AG04449 (cell line): ENCODE measurements at regions of chr3 and their contacts with region 1.

Region 1: DNA sequence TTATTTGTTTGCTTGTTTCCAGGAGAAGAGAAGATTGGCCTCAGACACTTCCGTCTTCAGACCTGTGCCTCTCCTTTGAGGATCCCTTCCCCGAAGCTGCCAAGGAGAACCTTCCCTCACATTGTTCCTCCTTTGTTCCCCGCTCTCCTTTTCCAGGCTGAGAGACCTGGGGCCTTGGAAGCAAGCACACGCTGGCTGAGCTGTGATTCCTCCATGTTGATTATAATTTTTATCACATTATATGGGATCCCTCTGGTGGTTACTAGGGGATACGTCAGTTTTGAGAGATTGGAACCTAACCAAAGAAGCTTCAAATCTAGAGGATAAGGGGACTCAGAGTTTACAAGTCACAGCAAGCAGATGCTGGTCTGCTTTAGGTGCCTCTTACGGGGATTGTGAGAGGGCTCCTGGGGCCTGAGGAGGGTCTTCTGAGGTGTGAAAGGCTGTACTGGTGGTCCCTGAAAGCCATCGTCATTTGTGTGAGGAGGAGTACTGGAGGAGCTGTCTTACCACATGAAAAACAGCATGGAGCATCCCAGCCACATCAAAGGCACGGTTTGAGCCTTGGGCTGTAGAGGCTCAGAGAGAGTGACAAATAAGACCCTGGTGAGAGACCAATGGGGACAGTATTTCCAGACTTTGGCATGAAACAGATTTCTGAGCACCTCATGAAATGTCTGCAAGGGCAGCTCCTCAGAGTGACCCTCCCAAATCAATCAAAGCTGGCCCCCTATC is 760.1 kb upstream of the CFAP20DC start:
- DNase-seq: no peak
- H3K4me3 ChIP-seq: no peak overlapping the region
- CTCF ChIP-seq: peak; percentile 17

Region 2: GRCh38 chr3:59759298-59760031 is 50.4 kb before region 1 on chr3:
- CTCF ChIA-PET with region 1: no interaction called
- POLR2A ChIA-PET with region 1: no interaction called
- DNase-seq: no peak
- H3K4me3 ChIP-seq: no peak overlapping the region
- CTCF ChIP-seq: no peak

Region 3: GRCh38 chr3:59771768-59772181 is 38.1 kb before region 1 on chr3:
- CTCF ChIA-PET with region 1: interaction called, 10 read pairs
- POLR2A ChIA-PET with region 1: no interaction called
- DNase-seq: peak; percentile 91
- H3K4me3 ChIP-seq: no peak overlapping the region
- CTCF ChIP-seq: no peak

Region 4: DNA sequence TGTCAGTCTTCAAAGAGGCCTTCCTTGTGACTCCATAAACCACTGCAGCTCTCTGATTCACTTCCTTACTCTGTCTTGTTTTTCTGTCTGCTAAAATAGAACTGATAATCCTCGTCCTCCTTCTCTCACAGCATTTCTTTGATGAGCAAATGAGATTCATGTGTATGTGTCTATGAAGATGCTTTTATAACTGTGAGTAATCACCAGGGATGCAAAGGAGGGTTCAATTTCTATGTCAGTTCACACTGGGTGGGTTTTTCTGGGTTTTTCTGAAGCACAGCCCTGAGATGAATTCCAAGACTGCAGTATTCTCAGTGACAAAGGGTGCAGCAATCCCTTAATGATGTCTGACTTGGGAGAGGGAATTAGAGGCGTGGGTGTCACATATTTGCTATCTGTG is 13.4 kb before region 1 on chr3:
- CTCF ChIA-PET with region 1: interaction called, 13 read pairs
- POLR2A ChIA-PET with region 1: no interaction called
- DNase-seq: no peak
- H3K4me3 ChIP-seq: no peak overlapping the region
- CTCF ChIP-seq: no peak

Region 5: DNA sequence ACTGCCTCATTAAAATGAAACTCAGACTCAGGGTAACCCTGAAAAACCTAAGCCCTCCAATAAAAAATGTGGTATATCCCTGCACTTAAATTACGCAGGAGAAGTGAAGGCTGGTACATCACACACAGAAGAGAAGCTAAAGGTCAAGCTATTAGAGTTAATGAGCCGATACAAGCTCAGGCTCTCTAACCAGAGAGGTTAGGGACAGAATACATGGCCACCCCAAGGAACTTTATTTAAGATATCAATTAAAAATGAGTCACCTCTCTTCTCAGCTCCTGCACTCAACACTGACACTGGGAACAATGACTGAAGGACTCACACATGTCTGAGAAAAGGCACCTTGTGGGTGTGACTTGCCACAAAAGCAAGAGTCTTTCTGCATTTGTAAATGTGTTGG is 40.5 kb after region 1 on chr3:
- CTCF ChIA-PET with region 1: no interaction called
- POLR2A ChIA-PET with region 1: no interaction called
- DNase-seq: no peak
- H3K4me3 ChIP-seq: no peak overlapping the region
- CTCF ChIP-seq: no peak

Region 6: DNA sequence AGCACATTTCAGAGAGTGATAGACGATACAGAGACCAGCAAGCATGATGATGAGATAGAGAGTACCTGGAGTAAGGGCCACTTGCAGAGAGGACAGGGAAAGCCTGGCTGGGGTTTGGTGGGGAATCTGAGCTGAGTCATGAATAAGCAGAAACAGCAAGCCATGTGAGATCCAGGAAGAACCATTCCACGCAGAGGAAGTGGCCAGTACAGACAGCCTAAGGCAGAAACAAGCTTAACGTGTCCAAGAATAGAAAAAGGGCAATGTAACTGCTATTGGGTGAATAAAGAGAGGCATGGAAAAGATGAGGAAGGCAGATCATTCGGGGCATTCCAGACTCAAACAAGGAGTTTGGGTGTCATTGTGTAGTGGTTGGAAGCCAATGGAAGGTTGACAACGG is 56.2 kb after region 1 on chr3:
- CTCF ChIA-PET with region 1: no interaction called
- POLR2A ChIA-PET with region 1: no interaction called
- DNase-seq: no peak
- H3K4me3 ChIP-seq: no peak overlapping the region
- CTCF ChIP-seq: no peak

Region 7: DNA sequence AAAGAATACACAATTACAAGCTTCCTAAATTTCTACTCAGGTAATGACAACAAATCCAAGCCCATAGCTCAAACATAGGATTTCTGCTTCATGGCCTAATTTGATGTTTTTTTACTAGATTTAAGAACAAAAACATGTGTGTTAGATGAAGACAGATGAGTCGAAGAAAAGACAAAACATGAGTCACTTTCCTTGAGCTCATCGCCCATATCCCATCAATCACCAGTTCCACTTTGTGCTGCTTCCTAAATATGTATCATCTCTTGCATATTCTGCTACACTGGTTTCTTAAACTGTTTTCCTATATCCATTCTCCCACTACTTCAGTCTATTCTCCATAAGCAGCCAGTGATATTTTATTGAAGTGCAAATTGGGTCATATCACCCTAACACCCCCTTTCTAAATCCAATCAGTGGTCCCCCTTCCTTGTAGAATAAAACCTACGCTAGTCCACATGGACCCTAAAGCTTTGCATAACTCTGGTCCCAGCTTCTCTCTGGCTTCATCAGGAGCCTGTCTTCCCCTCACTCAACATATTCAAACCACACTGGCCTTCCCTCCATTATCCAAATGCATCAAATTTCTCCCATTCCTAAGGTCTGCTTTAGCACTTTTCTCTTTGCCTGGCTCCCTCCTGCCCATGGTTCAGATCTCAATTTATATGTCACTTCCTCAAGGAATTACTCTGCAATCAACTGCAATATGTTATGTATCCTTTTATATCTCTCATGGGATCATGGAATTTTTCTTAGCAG is 407.5 kb after region 1 on chr3:
- CTCF ChIA-PET with region 1: no interaction called
- POLR2A ChIA-PET with region 1: no interaction called
- DNase-seq: no peak
- H3K4me3 ChIP-seq: no peak overlapping the region
- CTCF ChIP-seq: no peak